Breast epithelium (tissue), 4 donors: ENCODE measurements at regions of chr3 and their contacts with region 1.

Region 1: DNA sequence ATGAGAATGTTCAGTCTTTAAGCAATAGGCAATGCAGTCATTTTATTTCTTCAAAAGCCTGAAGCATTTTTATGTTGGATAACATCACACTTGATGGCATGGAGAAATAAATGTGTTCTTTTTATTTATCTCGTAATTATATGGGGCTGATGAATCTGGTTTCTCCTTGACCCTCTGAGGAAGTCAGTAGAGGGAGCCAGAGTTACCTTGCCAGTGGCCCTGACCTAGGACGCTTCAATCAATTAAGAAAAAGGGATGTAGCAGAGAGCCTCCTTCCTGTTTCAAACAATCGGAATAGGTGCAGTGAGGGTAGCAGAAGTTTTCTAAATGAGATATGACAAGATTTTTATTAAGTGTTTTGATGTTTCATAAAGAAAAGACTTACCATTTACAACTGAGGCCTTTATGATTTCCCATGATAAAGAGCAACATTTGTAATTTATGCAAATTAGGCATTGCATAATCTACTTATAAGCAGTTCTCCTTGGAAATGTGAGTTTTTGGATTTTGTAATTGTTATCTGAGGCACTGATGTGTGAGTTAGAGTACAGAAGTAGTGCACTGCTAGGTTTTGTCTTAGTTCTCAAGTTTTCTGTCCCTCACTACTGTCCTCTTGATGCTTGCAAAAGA is 129.1 kb downstream of the RAP2B start:
- DNase-seq: no peak
- H3K4me3 ChIP-seq: no peak overlapping the region
- H3K27ac ChIP-seq: no peak overlapping the region
- H3K4me1 ChIP-seq: no peaks in the 10 kb centered on the region
- H3K27me3 ChIP-seq: no peaks in the 10 kb centered on the region
- CTCF ChIP-seq: no peak
- POLR2A ChIP-seq: no peak

Region 2: DNA sequence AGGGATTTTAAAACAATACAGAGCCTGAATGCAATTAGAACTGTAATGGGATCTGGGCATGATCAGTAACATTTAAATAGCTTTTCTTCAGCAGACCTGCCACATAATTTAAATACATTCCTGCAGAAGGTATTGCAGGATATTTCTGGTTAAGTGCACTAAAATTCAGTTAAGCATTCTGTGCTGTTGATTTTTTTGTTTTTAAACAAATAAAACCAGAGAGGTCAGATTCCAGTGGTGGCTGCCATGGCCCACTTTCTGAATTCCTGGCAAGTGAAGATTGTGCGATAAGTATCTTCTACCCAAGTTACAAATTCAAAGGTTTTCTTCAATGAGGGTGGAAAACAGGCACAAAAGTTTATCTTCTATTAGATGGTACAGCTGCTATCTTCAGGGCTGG is 30.5 kb before region 1 on chr3:
- intact Hi-C with region 1: no loop called
- DNase-seq: no peak
- H3K4me3 ChIP-seq: no peak overlapping the region
- H3K27ac ChIP-seq: no peak overlapping the region
- H3K4me1 ChIP-seq: no peaks in the 10 kb centered on the region
- H3K27me3 ChIP-seq: no peaks in the 10 kb centered on the region
- CTCF ChIP-seq: no peak
- POLR2A ChIP-seq: no peak

Region 3: DNA sequence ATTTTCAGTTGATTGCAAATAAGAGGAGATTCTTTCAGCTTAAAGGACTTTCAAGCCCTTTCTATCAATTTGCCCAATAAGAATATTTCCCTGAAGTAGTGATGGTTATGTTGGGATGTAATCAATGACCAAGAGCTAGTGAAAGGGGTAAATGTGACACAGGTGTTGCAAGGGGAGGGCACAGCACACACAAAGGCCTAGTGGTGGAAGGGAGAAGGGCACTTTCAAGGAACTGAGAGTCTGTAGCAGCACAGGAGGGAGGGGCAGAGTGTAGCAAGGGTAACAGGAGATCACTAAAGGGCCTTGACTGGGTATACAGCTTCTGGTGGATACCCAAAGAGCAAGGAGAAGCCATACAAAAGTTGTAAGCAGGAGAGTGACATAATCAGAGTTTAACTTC is 612.3 kb after region 1 on chr3:
- intact Hi-C with region 1: loop called (anchors 10 kb)
- DNase-seq: no peak
- H3K4me3 ChIP-seq: no peak overlapping the region
- H3K27ac ChIP-seq: no peak overlapping the region
- H3K4me1 ChIP-seq: no peaks in the 10 kb centered on the region
- H3K27me3 ChIP-seq: no peaks in the 10 kb centered on the region
- CTCF ChIP-seq: no peak
- POLR2A ChIP-seq: no peak